SK-N-SH (cell line): ENCODE measurements at regions of chr3 and their contacts with region 1.

Region 1: GRCh38 chr3:194682694-194683310 is 2.9 kb upstream of the FAM43A start:
- DNase-seq: peak; percentile 81
- H3K4me3 ChIP-seq: peak overlapping the region in 1 of 2 experiments; percentile 25; a peak in 1 of 4 replicates
- H3K27ac ChIP-seq: peak overlapping the region in 1 of 2 experiments; percentile 26; a peak in 1 of 4 replicates
- H3K4me1 ChIP-seq: peaks cover 5 to 28% of the 10 kb centered on the region in 2 experiments; a peak in 1 of 4 replicates
- H3K27me3 ChIP-seq: no peaks in the 10 kb centered on the region
- CTCF ChIP-seq: peak; percentile 93
- EP300 ChIP-seq: no peak
- RAD21 ChIP-seq: peak; percentile 100

Region 2: DNA sequence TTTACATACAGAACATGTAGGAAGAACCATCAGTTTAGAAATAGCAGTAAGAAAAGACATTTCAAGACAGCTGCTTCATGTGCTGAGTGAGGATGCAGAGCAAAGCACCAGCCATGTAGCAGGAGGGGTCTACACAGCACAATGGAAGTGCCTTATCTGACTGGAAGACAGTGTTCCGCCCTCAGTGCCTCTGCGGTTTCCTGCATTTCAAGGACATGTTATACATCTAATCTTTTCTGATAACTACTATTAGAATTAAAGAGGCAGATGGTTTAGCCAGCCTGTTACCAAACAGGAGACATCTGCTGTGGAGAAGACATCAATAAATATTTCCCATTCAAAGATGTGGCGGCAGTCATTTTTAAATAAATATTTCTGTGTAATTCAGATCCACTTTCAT is 21.4 kb before region 1 on chr3:
- CTCF ChIA-PET with region 1: no interaction called
- POLR2A ChIA-PET with region 1: no interaction called
- DNase-seq: no peak
- H3K4me3 ChIP-seq: no peak overlapping the region
- H3K27ac ChIP-seq: no peak overlapping the region
- H3K4me1 ChIP-seq: no peaks in the 10 kb centered on the region
- H3K27me3 ChIP-seq: no peaks in the 10 kb centered on the region
- CTCF ChIP-seq: no peak
- EP300 ChIP-seq: no peak
- RAD21 ChIP-seq: no peak

Region 3: DNA sequence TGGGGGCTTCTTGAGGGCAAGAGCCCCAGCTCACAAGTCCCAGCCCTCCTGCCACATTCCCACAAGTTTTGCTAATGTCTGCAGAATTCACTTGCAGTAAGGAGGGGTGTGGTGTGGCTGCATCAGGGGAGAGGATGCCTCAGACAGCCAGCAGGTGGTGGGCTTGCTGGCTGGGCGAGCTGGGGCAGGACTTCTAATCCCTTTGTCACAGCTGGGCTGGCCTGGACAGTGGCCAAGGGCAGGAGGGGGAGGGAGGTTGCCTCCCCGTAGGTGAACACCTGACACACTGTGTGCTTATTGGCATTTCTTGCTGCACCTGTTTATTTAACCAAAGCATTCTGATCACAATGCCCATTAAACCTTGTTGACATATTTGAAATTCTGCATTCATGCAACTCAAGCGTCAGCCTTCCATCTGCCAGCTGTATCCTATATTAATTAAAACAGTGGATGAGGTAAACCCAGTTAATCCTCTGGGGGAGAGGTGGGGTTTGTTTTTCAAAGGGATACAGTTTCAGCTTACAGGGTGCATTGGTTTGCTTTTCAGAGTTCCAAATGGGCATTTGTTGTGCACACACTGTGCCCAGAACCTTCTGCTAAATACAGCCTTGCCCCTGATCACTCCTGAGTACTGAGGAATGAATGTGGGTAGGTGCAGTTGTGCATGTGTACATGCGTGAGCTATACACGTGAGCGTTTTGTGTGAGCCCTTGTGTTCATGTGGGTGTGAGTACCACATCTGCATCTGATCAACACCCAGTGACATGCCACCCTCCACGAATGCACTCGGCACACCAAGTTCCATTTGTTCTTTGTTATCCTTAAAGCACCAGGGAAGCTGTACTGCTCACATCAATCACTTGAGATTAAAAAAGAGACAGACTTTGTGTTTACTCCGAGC is 319.4 kb after region 1 on chr3:
- CTCF ChIA-PET with region 1: interaction called, 16 read pairs
- POLR2A ChIA-PET with region 1: no interaction called
- DNase-seq: peak; percentile 75
- H3K4me3 ChIP-seq: no peak overlapping the region
- H3K27ac ChIP-seq: no peak overlapping the region
- H3K4me1 ChIP-seq: peaks cover 0 to 17% of the 10 kb centered on the region in 2 experiments; a peak in 2 of 4 replicates
- H3K27me3 ChIP-seq: peaks cover 4% of the 10 kb centered on the region; the same call in 1 of the 2 replicates
- CTCF ChIP-seq: peak; percentile 51
- EP300 ChIP-seq: no peak
- RAD21 ChIP-seq: peak; percentile 68

Region 4: GRCh38 chr3:195106418-195106906 is 423.7 kb after region 1 on chr3:
- CTCF ChIA-PET with region 1: interaction called, 96 read pairs
- POLR2A ChIA-PET with region 1: interaction called, 4 read pairs
- DNase-seq: peak; percentile 94
- H3K4me3 ChIP-seq: no peak overlapping the region; a peak in 2 of 4 replicates
- H3K27ac ChIP-seq: no peak overlapping the region
- H3K4me1 ChIP-seq: peaks cover 11 to 17% of the 10 kb centered on the region in 2 experiments; a peak in 2 of 4 replicates
- H3K27me3 ChIP-seq: no peaks in the 10 kb centered on the region
- CTCF ChIP-seq: peak; percentile 97
- EP300 ChIP-seq: no peak
- RAD21 ChIP-seq: peak; percentile 88

Region 5: DNA sequence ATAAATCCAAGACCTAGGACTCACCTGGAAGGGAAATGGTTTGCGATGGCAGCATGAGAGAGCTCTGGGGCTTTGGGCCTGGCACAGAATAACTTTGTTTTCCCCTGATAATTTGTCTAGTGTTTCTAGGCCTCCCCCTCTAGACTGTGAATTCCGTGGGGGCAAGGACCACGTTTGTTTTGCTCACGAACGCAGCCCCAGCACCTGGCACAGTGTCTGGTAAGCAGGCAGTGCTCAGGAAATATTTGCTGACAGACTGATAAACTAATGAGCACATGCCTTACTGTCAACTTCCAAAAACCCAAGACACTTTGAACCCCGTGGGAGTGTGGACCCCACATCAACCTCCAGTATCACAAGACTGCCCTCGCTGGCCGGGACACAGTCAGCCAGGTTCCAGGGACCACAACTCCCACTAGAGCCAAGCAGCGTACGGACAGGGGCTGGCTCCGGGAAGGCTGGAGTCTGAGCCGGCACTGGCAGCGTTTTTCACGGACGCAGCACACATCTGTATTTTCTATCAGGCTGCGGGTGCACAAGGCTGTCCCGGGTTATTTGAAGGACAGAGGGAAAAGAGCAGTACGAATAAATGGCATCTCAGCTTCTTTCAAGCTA is 441.7 kb after region 1 on chr3:
- CTCF ChIA-PET with region 1: interaction called, 20 read pairs
- POLR2A ChIA-PET with region 1: no interaction called
- DNase-seq: peak; percentile 75
- H3K4me3 ChIP-seq: no peak overlapping the region
- H3K27ac ChIP-seq: peak overlapping the region in 1 of 2 experiments; percentile 18; a peak in 2 of 4 replicates
- H3K4me1 ChIP-seq: peaks cover 0 to 30% of the 10 kb centered on the region in 2 experiments; a peak in 1 of 4 replicates
- H3K27me3 ChIP-seq: no peaks in the 10 kb centered on the region
- CTCF ChIP-seq: no peak
- EP300 ChIP-seq: no peak
- RAD21 ChIP-seq: no peak

Region 6: GRCh38 chr3:195250473-195251251 is 567.9 kb after region 1 on chr3:
- CTCF ChIA-PET with region 1: interaction called, 50 read pairs
- POLR2A ChIA-PET with region 1: interaction called, 4 read pairs
- DNase-seq: no peak
- H3K4me3 ChIP-seq: no peak overlapping the region
- H3K27ac ChIP-seq: peak overlapping the region in 1 of 2 experiments; percentile 41; a peak in 2 of 4 replicates
- H3K4me1 ChIP-seq: peaks cover 15 to 79% of the 10 kb centered on the region in 2 experiments
- H3K27me3 ChIP-seq: no peaks in the 10 kb centered on the region
- CTCF ChIP-seq: no peak
- EP300 ChIP-seq: no peak
- RAD21 ChIP-seq: peak; percentile 50

Region 7: GRCh38 chr3:195271116-195271858 is 588.5 kb after region 1 on chr3 and contains the start of gene XXYLT1:
- CTCF ChIA-PET with region 1: interaction called, 50 read pairs
- POLR2A ChIA-PET with region 1: interaction called, 10 read pairs
- DNase-seq: peak; percentile 96
- H3K4me3 ChIP-seq: peak within 1 kb of the TSS; percentile 84 to 86
- H3K27ac ChIP-seq: peak within 1 kb of the TSS; percentile 82 to 94
- H3K4me1 ChIP-seq: peaks cover 0 to 22% of the 10 kb centered on the region in 2 experiments; a peak in 2 of 4 replicates
- H3K27me3 ChIP-seq: no peaks in the 10 kb centered on the region
- CTCF ChIP-seq: peak; percentile 96
- EP300 ChIP-seq: no peak
- RAD21 ChIP-seq: peak; percentile 94
- polyA plus RNA-seq, gene XXYLT1: 22.1 and 22.6 TPM in 2 replicates